Posterior vena cava (tissue), 2 donors: ENCODE measurements at regions of chr6 and their contacts with region 1.

Region 1: GRCh38 chr6:11374036-11375010 is 141.9 kb upstream of the NEDD9 start:
- DNase-seq: no peak

Region 2: GRCh38 chr6:11324453-11325015 is 49.8 kb before region 1 on chr6:
- intact Hi-C with region 1: no loop called
- DNase-seq: no peak

Region 3: DNA sequence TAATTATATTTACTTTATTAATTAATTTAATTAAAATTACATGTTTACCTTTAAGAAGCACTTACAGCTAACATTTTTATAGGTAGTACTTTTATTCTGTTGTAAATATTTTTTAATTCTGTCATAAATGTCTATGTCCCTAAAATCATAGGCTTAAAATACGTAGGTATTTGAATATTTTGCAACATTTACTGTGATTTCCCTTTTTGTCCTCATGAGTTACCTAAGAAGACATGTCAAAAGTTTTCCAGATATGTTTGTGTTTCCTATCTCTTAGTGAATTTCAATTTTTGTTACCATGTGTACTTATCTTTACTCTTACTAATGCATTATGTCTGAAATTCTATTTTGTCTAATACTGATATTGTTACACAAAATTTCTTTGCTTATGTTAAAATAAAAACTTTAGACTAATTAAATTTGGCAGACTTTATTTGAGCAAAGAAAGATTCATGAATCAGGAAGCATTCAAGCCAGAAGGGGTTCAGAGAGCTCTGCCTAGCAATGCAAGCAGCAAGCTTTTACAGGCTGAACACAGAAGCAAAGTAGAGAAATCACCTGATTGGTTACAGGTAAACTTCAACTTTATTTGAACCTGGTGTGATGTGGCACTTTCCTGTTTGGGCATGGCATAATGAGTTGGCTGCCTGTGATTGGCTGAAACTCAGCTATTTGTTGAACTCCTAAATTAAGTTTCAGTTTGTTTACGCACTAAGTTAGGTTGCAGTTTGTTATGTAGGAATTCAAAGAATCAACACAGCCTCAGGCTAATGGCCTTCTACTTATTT is 40.0 kb after region 1 on chr6:
- intact Hi-C with region 1: no loop called
- DNase-seq: no peak

Region 4: GRCh38 chr6:11434565-11435326 is 60.4 kb after region 1 on chr6:
- intact Hi-C with region 1: loop called in 1 of 2 experiments (anchors 10 kb)
- DNase-seq: no peak